GM10248 (cell line): ENCODE measurements at regions of chr1 and their contacts with region 1.

Region 1: DNA sequence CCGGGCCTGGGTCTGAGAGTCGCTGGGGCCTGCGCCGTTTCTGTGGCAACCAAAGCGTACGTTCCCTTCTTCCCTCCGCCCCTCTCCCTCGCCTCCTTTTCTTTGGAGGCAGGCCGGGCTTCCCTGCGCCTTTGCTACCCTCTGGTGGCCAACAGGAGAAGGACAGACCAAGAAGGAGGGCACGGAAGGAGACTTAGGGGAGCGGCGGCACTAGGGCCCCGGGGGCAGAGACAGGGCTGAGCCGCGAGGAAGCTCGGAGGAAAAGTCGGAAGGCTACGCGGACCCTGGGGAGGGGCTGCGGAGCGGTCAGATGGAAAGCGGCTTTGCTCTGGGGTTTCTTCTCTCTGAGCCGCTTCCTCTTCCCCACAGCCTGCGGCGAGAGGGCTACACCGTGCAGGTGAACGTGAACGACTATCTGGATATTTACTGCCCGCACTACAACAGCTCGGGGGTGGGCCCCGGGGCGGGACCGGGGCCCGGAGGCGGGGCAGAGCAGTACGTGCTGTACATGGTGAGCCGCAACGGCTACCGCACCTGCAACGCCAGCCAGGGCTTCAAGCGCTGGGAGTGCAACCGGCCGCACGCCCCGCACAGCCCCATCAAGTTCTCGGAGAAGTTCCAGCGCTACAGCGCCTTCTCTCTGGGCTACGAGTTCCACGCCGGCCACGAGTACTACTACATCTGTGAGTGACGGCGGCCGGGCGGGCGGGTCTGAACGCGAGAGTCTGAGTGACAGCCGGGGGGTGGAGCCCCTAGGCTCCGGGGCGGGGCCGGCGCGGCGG is 6.3 kb downstream of the EFNA3 start:
- DNase-seq: peak; percentile 96
- CTCF ChIP-seq: peak; percentile 94

Region 2: DNA sequence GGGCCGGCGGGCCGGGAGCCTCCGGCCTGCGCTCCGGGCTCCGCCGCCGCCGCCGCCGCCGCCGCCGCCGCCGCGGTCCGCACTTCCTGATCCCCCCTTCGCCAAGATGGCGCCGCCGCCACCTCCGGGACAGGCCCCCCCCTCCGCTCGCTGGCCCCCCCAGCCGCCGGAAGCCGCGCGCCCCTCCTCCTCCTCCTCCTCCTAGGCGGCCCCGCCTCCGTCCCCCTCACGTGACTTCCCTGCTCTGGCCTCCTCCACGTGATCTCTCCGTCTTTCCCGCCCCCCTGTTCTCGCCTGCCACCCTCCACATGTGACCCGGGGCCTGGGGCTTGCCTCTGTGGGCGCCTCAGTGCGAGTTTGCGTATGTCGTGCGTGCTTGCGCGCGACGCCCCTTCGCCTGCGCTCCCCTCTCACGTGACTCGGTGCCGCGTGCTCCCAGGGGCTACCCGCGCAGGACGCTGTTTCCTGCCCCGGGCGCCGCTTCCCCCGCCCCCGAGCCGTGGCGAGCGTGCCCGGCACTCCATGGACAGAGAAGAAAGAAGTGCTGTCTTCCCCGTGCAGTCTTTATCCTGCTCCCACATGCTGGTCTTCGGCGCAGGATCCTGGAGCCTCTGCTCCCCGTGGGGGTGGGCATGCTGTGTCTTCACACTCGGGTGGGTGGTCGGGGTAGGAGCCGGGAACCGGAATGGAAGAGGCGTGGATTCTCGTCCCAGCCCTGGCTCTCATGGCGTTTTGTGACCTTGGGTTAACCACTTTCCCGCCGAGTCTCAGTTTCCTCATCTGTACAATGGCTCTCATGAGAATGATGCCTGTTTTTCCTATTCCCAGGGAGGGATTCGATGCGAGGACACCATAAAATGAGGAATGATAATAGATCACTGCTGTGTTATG is 526.1 kb before region 1 on chr1 and contains the start of gene UBE2Q1:
- CTCF ChIA-PET with region 1: interaction called, 16 read pairs
- POLR2A ChIA-PET with region 1: no interaction called
- DNase-seq: peak; percentile 98
- CTCF ChIP-seq: no peak

Region 3: GRCh38 chr1:155044812-155045690 is 39.9 kb before region 1 on chr1:
- CTCF ChIA-PET with region 1: interaction called, 48 read pairs
- POLR2A ChIA-PET with region 1: no interaction called
- DNase-seq: peak; percentile 81
- CTCF ChIP-seq: peak; percentile 67

Region 4: GRCh38 chr1:155063550-155064110 is 21.3 kb before region 1 on chr1 and contains the start of gene EFNA4:
- CTCF ChIA-PET with region 1: interaction called, 169 read pairs
- POLR2A ChIA-PET with region 1: no interaction called
- DNase-seq: peak; percentile 91
- CTCF ChIP-seq: no peak

Region 5: GRCh38 chr1:155105604-155106022 is 20.7 kb after region 1 on chr1:
- CTCF ChIA-PET with region 1: interaction called, 10 read pairs
- POLR2A ChIA-PET with region 1: no interaction called
- DNase-seq: no peak
- CTCF ChIP-seq: no peak

Region 6: GRCh38 chr1:155135415-155136028 is 50.6 kb after region 1 on chr1 and contains the start of gene SLC50A1:
- CTCF ChIA-PET with region 1: interaction called, 26 read pairs
- POLR2A ChIA-PET with region 1: no interaction called
- DNase-seq: peak; percentile 96
- CTCF ChIP-seq: no peak

Region 7: GRCh38 chr1:155172732-155173477 is 88.0 kb after region 1 on chr1 and contains the start of gene KRTCAP2:
- CTCF ChIA-PET with region 1: interaction called, 184 read pairs
- POLR2A ChIA-PET with region 1: no interaction called
- DNase-seq: peak; percentile 97
- CTCF ChIP-seq: peak; percentile 98

Region 8: GRCh38 chr1:155185351-155186066 is 100.6 kb after region 1 on chr1:
- CTCF ChIA-PET with region 1: no interaction called
- POLR2A ChIA-PET with region 1: no interaction called
- DNase-seq: peak; percentile 87
- CTCF ChIP-seq: no peak